WTC11 (cell line): ENCODE measurements at regions of chr22 and their contacts with region 1.

Region 1: DNA sequence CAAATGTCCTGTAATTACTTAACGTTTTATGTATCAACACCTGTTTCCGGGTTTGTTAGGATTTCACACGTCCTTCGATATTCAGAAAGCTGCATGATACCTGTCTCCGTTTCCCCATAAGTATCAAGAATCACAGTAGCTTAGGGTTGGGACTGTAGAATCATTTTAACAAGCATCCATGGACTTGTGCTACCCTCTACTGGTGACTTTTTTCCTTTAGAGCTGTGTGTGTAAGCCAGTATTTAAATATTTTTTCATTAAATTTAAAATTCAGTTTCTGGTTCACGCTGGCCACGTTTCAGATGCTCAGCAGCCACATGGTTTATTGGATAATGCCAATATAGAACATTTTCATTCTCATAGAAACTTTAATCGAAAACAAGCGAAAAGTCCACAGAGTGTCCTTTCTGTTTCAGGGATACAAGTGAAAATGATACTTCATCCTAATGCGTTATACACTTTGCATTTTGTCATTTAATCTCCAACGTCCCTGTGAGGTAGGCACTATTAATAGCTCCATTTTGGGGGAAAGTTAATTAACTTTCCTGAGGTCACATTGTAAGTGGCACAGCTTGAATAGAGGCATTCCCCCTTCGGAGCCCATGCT is 61.5 kb upstream of the SLC25A18 start:
- DNase-seq: no peak
- ATAC-seq: peak; percentile 79
- H3K4me3 Mint-ChIP-seq: no peak overlapping the region
- H3K27ac Mint-ChIP-seq: 0 out of 2 replicates have a peak overlapping the region, but pooled peaks have one; percentile 74
- H3K4me1 Mint-ChIP-seq: peaks cover 2% of the 10 kb centered on the region; the same call in 1 of the 2 replicates
- H3K27me3 Mint-ChIP-seq: no peaks in the 10 kb centered on the region
- CTCF ChIP-seq: peak; percentile 42; the same call in 1 of the 2 replicates

Region 2: GRCh38 chr22:17213976-17214375 is 287.8 kb before region 1 on chr22:
- CTCF ChIA-PET with region 1: interaction called, 16 read pairs
- POLR2A ChIA-PET with region 1: no interaction called
- DNase-seq: peak; percentile 72
- ATAC-seq: peak; percentile 70
- H3K4me3 Mint-ChIP-seq: no peak overlapping the region
- H3K27ac Mint-ChIP-seq: no peak overlapping the region
- H3K4me1 Mint-ChIP-seq: peaks cover 41% of the 10 kb centered on the region
- H3K27me3 Mint-ChIP-seq: no peaks in the 10 kb centered on the region; the same call in 1 of the 2 replicates
- CTCF ChIP-seq: peak; percentile 31; the same call in 1 of the 2 replicates

Region 3: GRCh38 chr22:17266251-17266971 is 235.4 kb before region 1 on chr22:
- CTCF ChIA-PET with region 1: interaction called, 14 read pairs
- POLR2A ChIA-PET with region 1: interaction called, 3 read pairs
- DNase-seq: peak; percentile 81
- ATAC-seq: peak; percentile 66
- H3K4me3 Mint-ChIP-seq: peak overlapping the region; percentile 69
- H3K27ac Mint-ChIP-seq: peak overlapping the region; percentile 96
- H3K4me1 Mint-ChIP-seq: peaks cover 90% of the 10 kb centered on the region
- H3K27me3 Mint-ChIP-seq: no peaks in the 10 kb centered on the region
- CTCF ChIP-seq: no peak

Region 4: GRCh38 chr22:17307566-17307965 is 194.2 kb before region 1 on chr22:
- CTCF ChIA-PET with region 1: interaction called, 13 read pairs
- POLR2A ChIA-PET with region 1: no interaction called
- DNase-seq: no peak
- ATAC-seq: peak; percentile 70
- H3K4me3 Mint-ChIP-seq: no peak overlapping the region
- H3K27ac Mint-ChIP-seq: peak overlapping the region; percentile 77
- H3K4me1 Mint-ChIP-seq: peaks cover 18% of the 10 kb centered on the region
- H3K27me3 Mint-ChIP-seq: no peaks in the 10 kb centered on the region; the same call in 1 of the 2 replicates
- CTCF ChIP-seq: no peak

Region 5: DNA sequence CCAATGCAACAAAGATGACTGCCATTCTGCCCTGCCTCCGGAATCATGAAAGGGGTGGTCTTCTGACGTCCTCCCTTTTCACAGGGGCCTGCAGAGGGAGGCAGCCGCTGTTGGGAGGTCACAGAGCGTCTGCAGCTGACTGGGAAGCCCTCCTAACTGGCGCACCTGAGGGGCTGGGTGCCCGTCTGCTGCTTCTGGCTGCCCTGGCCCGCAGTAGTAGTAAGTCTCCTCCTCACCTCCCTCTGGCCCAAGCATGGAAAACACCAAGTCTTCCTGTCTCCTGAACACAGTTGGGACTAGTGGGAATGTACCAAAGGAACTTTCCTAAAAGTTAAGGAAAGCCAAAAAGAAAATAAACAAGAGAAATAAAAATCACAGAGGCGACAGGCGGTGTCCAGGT is 169.7 kb before region 1 on chr22:
- CTCF ChIA-PET with region 1: no interaction called
- POLR2A ChIA-PET with region 1: no interaction called
- DNase-seq: no peak
- ATAC-seq: no peak
- H3K4me3 Mint-ChIP-seq: no peak overlapping the region
- H3K27ac Mint-ChIP-seq: no peak overlapping the region
- H3K4me1 Mint-ChIP-seq: peaks cover 7% of the 10 kb centered on the region; the same call in 1 of the 2 replicates
- H3K27me3 Mint-ChIP-seq: no peaks in the 10 kb centered on the region
- CTCF ChIP-seq: no peak

Region 6: DNA sequence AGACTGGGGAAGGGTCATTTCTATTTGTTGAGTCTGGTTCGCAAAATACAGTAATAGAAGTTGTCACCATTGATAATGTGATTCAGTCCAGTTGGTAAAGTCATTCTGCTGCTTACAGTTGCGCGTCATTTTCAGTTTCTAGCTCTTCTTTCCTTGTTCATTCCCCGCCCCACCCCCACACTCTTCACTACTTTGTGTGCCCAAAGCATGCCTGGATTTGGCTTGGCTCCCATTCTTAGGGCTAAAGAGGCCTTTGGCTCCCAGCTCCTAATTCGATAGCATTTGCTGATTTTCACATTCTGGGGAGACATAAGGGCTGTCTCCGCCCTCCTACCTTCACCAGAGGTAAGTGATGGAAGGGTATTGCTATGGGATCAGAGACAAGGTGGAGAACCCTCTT is 89.5 kb before region 1 on chr22:
- CTCF ChIA-PET with region 1: interaction called, 12 read pairs
- POLR2A ChIA-PET with region 1: no interaction called
- DNase-seq: no peak
- ATAC-seq: no peak
- H3K4me3 Mint-ChIP-seq: no peak overlapping the region; the same call in 1 of the 2 replicates
- H3K27ac Mint-ChIP-seq: peak overlapping the region; percentile 83
- H3K4me1 Mint-ChIP-seq: peaks cover 85% of the 10 kb centered on the region
- H3K27me3 Mint-ChIP-seq: no peaks in the 10 kb centered on the region
- CTCF ChIP-seq: no peak